ENCODE measurements at regions of chr7 and their contacts with region 1.

Region 1: GRCh38 chr7:116062666-116063065 is 32.1 kb upstream of the TFEC start:
- DNase-seq: no peak
- H3K4me3 ChIP-seq: no peak overlapping the region
- H3K27ac ChIP-seq: no peak overlapping the region
- H3K4me1 ChIP-seq: no peaks in the 10 kb centered on the region
- H3K27me3 ChIP-seq: no peaks in the 10 kb centered on the region
- CTCF ChIP-seq: no peak

Region 2: GRCh38 chr7:114678116-114678515 is 1384.5 kb before region 1 on chr7:
- CTCF ChIA-PET with region 1: no interaction called
- POLR2A ChIA-PET with region 1: no interaction called
- intact Hi-C with region 1: loop called (anchors 5 kb)
- DNase-seq: no peak
- H3K4me3 ChIP-seq: no peak overlapping the region
- H3K27ac ChIP-seq: no peak overlapping the region
- H3K4me1 ChIP-seq: no peaks in the 10 kb centered on the region
- H3K27me3 ChIP-seq: no peaks in the 10 kb centered on the region
- CTCF ChIP-seq: no peak

Region 3: DNA sequence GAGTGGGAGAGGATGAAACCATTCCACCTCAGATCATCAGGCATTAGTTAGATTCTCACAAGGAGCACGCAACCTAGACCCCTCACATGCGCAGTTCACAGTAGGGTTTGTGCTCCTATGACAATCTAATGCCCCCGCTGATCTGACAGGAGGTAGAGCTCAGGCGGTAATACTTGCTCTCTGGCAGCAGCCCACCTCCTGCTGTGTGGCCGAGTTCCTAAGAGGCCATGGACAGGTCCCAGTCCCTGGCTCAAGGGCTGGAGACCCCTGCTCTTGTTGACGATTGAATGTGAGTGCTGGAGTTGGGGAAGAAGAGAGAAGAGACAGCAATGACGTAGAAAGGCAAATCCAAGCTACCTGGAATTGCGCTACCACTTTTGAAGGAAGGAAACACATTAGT is 299.3 kb before region 1 on chr7:
- CTCF ChIA-PET with region 1: no interaction called
- POLR2A ChIA-PET with region 1: no interaction called
- intact Hi-C with region 1: no loop called
- DNase-seq: no peak
- H3K4me3 ChIP-seq: no peak overlapping the region
- H3K27ac ChIP-seq: no peak overlapping the region
- H3K4me1 ChIP-seq: no peaks in the 10 kb centered on the region
- H3K27me3 ChIP-seq: no peaks in the 10 kb centered on the region
- CTCF ChIP-seq: no peak

Region 4: DNA sequence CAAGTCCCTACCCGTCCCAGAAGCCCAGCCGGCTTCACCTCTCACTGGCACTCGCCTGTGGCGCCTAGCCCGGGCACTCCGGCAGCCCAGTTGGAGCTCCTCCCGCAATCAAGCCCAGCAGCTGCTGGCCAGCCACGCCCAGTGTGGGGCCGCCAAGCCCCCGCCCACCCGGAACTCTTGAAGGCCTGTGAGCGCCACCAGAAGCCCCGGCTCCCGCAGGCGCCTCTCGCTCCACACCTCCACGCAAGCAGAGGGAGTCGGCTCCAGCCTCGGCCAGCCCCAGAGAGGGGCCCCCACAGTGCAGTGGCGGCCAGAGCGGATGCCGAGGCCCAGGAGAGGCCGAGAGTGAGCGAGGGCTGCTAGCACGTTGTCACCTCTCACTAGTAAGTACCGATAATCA is 272.8 kb before region 1 on chr7:
- CTCF ChIA-PET with region 1: no interaction called
- POLR2A ChIA-PET with region 1: no interaction called
- intact Hi-C with region 1: no loop called
- DNase-seq: no peak
- H3K4me3 ChIP-seq: no peak overlapping the region
- H3K27ac ChIP-seq: no peak overlapping the region
- H3K4me1 ChIP-seq: no peaks in the 10 kb centered on the region
- H3K27me3 ChIP-seq: no peaks in the 10 kb centered on the region
- CTCF ChIP-seq: no peak

Region 5: DNA sequence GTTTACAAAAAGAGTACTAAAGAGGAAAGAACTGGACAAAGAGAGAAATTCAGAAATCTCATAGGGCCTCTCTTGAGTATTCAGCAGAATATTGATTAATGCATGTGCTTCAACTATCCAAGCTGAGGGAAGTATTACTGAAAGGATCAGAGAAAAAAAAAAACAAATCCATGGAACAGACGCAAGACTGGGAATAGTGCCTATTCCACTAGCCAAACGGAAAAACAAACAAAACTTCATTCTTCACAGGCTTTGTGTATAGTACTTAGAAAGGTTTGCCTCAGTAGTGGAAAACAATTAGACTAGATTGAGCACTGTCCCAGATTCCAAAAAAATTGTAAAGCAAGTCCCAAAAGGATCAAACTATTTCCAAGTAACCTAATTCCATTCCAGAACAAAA is 138.3 kb before region 1 on chr7:
- CTCF ChIA-PET with region 1: no interaction called
- POLR2A ChIA-PET with region 1: no interaction called
- intact Hi-C with region 1: no loop called
- DNase-seq: no peak
- H3K4me3 ChIP-seq: no peak overlapping the region
- H3K27ac ChIP-seq: no peak overlapping the region
- H3K4me1 ChIP-seq: no peaks in the 10 kb centered on the region
- H3K27me3 ChIP-seq: no peaks in the 10 kb centered on the region
- CTCF ChIP-seq: no peak

Measured in PC-9 (cell line).